WTC11 (cell line): ENCODE measurements at regions of chr12 and their contacts with region 1.

Region 1: GRCh38 chr12:107884769-107885694 is 110.5 kb downstream of the ASCL4 start:
- DNase-seq: peak; percentile 62
- ATAC-seq: peak; percentile 89
- H3K4me3 Mint-ChIP-seq: no peak overlapping the region
- H3K27ac Mint-ChIP-seq: no peak overlapping the region
- H3K4me1 Mint-ChIP-seq: no peaks in the 10 kb centered on the region
- H3K27me3 Mint-ChIP-seq: no peaks in the 10 kb centered on the region; the same call in 1 of the 2 replicates
- CTCF ChIP-seq: peak; percentile 51; the same call in 1 of the 2 replicates

Region 2: GRCh38 chr12:107760809-107761501 is 124.1 kb before region 1 on chr12 and contains the start of gene PRDM4:
- CTCF ChIA-PET with region 1: interaction called, 15 read pairs
- POLR2A ChIA-PET with region 1: no interaction called
- DNase-seq: peak; percentile 92
- ATAC-seq: peak; percentile 92
- H3K4me3 Mint-ChIP-seq: peak within 1 kb of the TSS; percentile 88
- H3K27ac Mint-ChIP-seq: peak within 1 kb of the TSS; percentile 34
- H3K4me1 Mint-ChIP-seq: peaks cover 14% of the 10 kb centered on the region
- H3K27me3 Mint-ChIP-seq: peaks cover 17% of the 10 kb centered on the region
- CTCF ChIP-seq: no peak
- total RNA-seq, gene PRDM4: 18.2 to 21.4 TPM (median 20.5 TPM) in 3 replicates

Region 3: GRCh38 chr12:107775093-107775721 is 109.8 kb before region 1 on chr12:
- CTCF ChIA-PET with region 1: interaction called, 15 read pairs
- POLR2A ChIA-PET with region 1: interaction called, 3 read pairs
- DNase-seq: peak; percentile 82
- ATAC-seq: peak; percentile 94
- H3K4me3 Mint-ChIP-seq: peak overlapping the region; percentile 63
- H3K27ac Mint-ChIP-seq: no peak overlapping the region
- H3K4me1 Mint-ChIP-seq: peaks cover 11% of the 10 kb centered on the region; the same call in 1 of the 2 replicates
- H3K27me3 Mint-ChIP-seq: peaks cover 90% of the 10 kb centered on the region
- CTCF ChIP-seq: no peak

Region 4: GRCh38 chr12:107843351-107844311 is 41.4 kb before region 1 on chr12:
- CTCF ChIA-PET with region 1: interaction called, 10 read pairs
- POLR2A ChIA-PET with region 1: no interaction called
- DNase-seq: peak; percentile 50
- ATAC-seq: peak; percentile 60
- H3K4me3 Mint-ChIP-seq: peak overlapping the region; percentile 82
- H3K27ac Mint-ChIP-seq: no peak overlapping the region
- H3K4me1 Mint-ChIP-seq: peaks cover 3% of the 10 kb centered on the region; the same call in 1 of the 2 replicates
- H3K27me3 Mint-ChIP-seq: peaks cover 82% of the 10 kb centered on the region
- CTCF ChIP-seq: no peak

Region 5: DNA sequence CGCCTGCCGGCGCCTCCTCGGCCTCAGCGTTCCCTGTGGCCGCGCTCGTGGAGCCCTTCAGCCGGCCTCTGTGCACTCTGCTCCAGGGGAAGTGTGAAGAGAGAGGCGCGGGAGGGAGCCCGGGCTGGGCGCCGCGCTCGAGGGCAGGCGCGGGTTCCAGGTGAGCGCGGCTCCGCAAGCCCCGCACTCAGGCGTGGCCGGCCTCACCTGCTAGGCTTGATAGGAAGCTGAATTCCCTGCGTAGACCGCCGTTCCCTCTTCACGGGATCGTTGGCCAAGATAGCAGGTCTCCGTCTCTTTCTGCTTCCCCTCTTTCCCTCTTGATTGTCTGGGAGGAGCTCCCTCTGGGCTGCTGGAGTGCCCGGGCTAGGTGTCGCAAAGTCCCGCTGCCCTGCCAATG is 20.8 kb before region 1 on chr12:
- CTCF ChIA-PET with region 1: interaction called, 15 read pairs
- POLR2A ChIA-PET with region 1: no interaction called
- DNase-seq: peak; percentile 49
- ATAC-seq: peak; percentile 95
- H3K4me3 Mint-ChIP-seq: peak overlapping the region; percentile 71
- H3K27ac Mint-ChIP-seq: no peak overlapping the region
- H3K4me1 Mint-ChIP-seq: peaks cover 12% of the 10 kb centered on the region
- H3K27me3 Mint-ChIP-seq: peaks cover 56% of the 10 kb centered on the region
- CTCF ChIP-seq: no peak

Region 6: DNA sequence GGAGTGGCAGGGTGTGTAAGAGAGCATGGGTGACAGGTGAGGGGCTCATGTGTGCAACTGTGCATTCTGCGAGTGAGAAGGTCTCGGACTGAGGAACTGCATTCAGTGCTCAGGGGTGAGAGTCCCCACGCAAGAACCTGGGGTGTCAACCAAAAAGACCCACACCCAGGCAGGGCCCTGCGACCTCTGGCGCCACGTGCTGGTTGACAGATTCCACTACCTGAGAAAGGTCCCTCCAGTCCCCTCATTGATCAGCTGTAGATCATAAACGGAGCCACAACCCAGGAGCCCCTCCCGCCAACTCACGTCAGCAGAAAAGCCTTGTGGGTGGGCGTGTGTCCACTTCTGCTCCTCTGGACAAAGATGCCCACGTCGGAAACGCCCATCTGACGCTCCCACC is 11.8 kb before region 1 on chr12:
- CTCF ChIA-PET with region 1: interaction called, 14 read pairs
- POLR2A ChIA-PET with region 1: no interaction called
- DNase-seq: peak; percentile 35
- ATAC-seq: peak; percentile 64
- H3K4me3 Mint-ChIP-seq: no peak overlapping the region
- H3K27ac Mint-ChIP-seq: no peak overlapping the region
- H3K4me1 Mint-ChIP-seq: no peaks in the 10 kb centered on the region
- H3K27me3 Mint-ChIP-seq: peaks cover 22% of the 10 kb centered on the region
- CTCF ChIP-seq: no peak

Region 7: DNA sequence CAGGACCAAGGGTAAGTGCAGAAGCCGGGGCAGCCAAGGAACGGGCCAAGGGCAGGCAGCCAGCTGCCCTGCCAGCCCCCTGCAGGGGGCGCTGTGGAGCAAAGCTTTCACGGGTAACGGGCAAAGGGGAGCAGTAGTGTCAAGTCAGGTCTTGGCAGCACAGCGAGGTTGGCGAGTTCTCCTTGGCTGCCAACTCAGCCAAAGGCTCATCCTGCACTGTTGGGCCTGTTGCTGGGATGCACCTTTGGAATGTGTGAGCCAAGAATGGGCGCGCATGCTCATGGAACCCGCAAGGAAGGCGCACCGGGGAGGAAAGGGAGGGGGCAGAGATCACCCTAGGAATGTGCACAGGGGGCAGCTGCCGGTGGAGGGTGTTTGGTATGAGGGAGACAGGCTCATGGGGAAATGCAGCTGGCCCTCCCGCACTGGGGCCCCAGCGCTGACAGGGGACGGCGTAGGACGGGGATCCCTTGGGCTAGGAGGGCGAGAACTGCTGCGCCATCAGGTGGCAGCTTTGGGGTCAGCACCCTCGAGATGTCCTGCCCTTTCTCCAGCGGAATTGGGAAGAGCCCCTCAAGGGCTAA is 27.5 kb after region 1 on chr12:
- CTCF ChIA-PET with region 1: interaction called, 25 read pairs
- POLR2A ChIA-PET with region 1: no interaction called
- DNase-seq: peak; percentile 85
- ATAC-seq: peak; percentile 94
- H3K4me3 Mint-ChIP-seq: peak overlapping the region; percentile 93
- H3K27ac Mint-ChIP-seq: no peak overlapping the region
- H3K4me1 Mint-ChIP-seq: no peaks in the 10 kb centered on the region
- H3K27me3 Mint-ChIP-seq: peaks cover 52% of the 10 kb centered on the region
- CTCF ChIP-seq: peak; percentile 94